Prostate gland (tissue), 2 donors: ENCODE measurements at regions of chr13 and their contacts with region 1.

Region 1: GRCh38 chr13:44484562-44485138 is 91.5 kb downstream of the TSC22D1 start:
- DNase-seq: no peak
- H3K4me3 ChIP-seq: no peak overlapping the region
- H3K27ac ChIP-seq: no peak overlapping the region
- H3K4me1 ChIP-seq: no peaks in the 10 kb centered on the region
- H3K27me3 ChIP-seq: no peaks in the 10 kb centered on the region
- CTCF ChIP-seq: no peak
- POLR2A ChIP-seq: no peak

Region 2: DNA sequence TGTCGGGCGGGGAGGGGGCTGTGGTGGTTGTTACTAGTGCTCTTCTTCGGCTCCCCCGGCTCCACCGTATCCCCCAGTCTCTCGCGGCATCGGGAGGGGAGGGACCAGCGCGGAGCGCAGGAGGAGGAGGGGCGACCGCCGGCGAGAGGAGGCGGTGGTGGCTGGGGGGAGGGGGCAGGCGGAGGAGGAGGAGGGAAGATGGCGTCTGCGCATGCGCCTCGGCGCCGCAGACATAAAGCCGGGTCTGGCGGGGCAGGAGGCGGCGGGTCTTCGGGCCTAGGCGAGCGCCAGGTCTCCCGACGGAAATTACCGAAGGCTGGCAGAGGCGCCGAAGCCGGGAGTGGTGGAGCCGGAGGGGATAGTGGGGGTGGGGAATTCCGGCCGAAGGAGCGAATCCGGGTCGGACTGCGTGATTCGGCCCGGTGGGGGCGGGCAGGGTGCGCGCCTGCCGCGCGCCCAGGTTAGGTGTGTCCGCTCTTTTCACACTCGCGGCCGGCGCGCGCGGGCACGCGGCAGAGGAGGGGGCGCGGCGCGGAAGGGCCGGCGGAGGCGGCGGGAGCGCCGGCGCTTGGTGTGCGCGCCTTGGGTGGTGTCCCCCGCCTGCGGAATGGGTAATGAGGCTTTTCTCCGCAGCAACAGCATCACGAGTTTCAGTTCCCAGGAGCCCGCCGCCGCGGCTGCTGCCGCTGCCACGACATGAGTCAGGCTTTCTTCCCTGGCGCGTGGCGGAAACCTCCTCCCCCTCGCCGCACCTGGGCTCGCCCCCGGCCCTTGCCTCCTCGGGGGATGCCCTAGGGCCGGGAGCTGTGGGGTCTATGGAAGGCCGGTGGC is 92.8 kb after region 1 on chr13:
- intact Hi-C with region 1: loop called (anchors 5 kb)
- DNase-seq: peak; percentile 96
- H3K4me3 ChIP-seq: peak overlapping the region; percentile 90 to 97
- H3K27ac ChIP-seq: peak overlapping the region; percentile 98
- H3K4me1 ChIP-seq: peaks cover 5% of the 10 kb centered on the region
- H3K27me3 ChIP-seq: no peaks in the 10 kb centered on the region
- CTCF ChIP-seq: no peak
- POLR2A ChIP-seq: peak; percentile 65

Region 3: DNA sequence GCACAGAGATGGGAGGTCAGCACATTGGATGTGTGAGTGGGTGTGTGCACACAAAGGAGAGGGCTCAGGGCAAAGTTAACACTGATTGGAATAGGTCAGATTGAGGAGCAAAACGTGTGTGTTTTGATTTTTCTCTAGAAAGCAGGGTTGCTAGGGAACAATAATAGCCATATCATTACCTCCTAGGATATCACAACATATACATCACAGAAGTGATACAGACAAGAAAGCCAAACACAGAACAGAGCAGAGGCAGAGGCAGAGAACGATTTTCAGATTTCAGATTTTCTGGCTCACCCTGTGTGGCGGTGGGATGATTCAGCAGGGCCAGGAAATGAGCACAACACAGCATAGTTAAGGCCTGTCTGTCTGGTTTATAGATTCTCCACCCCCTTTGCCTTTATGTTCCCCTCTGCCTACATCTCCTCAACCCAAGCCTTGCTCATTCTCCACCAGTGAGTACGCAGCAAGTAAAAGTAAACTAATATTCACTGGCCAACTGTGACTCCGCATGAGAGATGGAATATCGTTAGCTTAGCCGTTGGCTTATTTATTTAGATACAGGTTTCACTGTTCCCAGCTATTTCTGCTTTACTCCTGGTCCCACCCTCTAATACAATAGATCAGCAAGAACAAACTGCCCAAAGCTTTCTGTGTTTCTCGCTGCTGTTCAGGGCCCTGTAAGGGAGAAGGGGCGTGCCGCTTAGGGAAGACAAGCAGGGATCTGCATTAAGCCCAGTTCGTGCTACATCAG is 274.2 kb after region 1 on chr13:
- intact Hi-C with region 1: loop called (anchors 10 kb)
- DNase-seq: peak; percentile 15
- H3K4me3 ChIP-seq: no peak overlapping the region
- H3K27ac ChIP-seq: peak overlapping the region; percentile 85 to 86
- H3K4me1 ChIP-seq: peaks cover 14% of the 10 kb centered on the region
- H3K27me3 ChIP-seq: no peaks in the 10 kb centered on the region
- CTCF ChIP-seq: no peak
- POLR2A ChIP-seq: no peak

Region 4: GRCh38 chr13:44879463-44880058 is 394.9 kb after region 1 on chr13:
- intact Hi-C with region 1: loop called (anchors 10 kb)
- DNase-seq: no peak
- H3K4me3 ChIP-seq: no peak overlapping the region
- H3K27ac ChIP-seq: no peak overlapping the region
- H3K4me1 ChIP-seq: no peaks in the 10 kb centered on the region
- H3K27me3 ChIP-seq: no peaks in the 10 kb centered on the region
- CTCF ChIP-seq: peak in 3 of 4 experiments; percentile 23 to 42 (median 38)
- POLR2A ChIP-seq: no peak